ENCODE measurements at regions of chr19 and their contacts with region 1.

Region 1: DNA sequence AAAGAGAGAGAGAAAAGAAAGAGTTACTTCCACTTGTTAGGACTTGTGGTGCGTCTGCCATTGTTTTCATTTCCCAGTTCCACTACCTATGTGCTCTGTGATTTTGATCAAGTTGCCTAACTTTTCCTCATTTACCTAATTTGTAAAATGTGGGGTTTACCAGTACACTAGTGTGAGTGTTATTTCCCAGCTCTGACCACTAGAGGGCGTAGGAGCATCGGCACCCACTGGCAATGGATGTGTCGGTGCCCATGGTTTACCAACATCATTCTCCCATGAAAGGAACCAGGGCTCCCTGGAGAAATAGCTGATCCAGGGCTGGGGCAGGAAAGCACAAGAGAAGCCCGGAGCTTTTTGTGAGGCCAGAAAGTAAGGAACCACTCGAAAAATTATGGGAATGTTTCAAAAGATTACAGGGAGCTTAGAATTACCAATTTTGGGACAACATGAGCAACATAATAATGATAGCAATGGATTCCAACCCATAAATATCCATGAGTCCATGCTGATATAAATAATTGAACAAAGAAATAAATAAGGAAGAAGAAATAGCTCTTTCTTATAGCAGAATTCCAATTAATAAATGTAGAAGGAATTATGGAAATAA is 15.1 kb upstream of the CEACAM4 start:
- DNase-seq: peak in 2 of 3 donors; percentile 66 to 92
- ATAC-seq: peak; percentile 99
- H3K4me3 ChIP-seq: no peak overlapping the region
- H3K4me1 ChIP-seq: no peaks in the 10 kb centered on the region
- CTCF ChIP-seq: peak; percentile 71

Region 2: DNA sequence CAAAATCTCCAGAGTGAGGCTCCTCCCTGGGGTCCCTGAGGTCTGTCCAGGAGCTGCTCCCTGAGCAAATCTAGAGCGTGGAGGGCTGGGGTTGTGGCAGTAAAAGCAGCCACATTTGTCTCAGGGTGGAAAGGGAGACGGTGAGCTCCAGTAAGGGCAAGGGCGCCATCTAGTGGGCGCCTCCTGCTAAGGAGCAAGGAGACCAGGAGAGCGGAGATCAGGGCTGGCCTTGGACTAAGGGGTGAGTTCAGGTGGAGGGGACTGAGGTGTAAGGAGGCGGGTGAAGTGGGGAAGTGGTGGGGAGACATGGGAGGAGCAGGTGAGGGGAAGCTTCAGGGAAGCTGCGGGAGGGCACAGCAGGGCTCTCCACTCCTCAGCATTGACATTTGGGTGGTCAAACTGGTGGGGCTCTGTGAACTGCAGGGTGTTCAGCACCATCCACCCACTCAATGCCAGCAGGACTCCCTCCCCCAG is 71.3 kb before region 1 on chr19:
- intact Hi-C with region 1: no loop called
- DNase-seq: peak; percentile 81 to 92 (median 84)
- ATAC-seq: peak; percentile 96
- H3K4me3 ChIP-seq: no peak overlapping the region
- H3K4me1 ChIP-seq: no peaks in the 10 kb centered on the region
- CTCF ChIP-seq: peak; percentile 78

Region 3: GRCh38 chr19:41691268-41691970 is 49.4 kb after region 1 on chr19:
- intact Hi-C with region 1: loop called in 1 of 2 experiments (anchors 5 kb)
- DNase-seq: peak in 2 of 3 donors; percentile 19 to 70
- ATAC-seq: peak; percentile 68
- H3K4me3 ChIP-seq: no peak overlapping the region
- H3K4me1 ChIP-seq: no peaks in the 10 kb centered on the region
- CTCF ChIP-seq: peak; percentile 43